WTC11 (cell line): ENCODE measurements at regions of chr6 and their contacts with region 1.

Region 1: DNA sequence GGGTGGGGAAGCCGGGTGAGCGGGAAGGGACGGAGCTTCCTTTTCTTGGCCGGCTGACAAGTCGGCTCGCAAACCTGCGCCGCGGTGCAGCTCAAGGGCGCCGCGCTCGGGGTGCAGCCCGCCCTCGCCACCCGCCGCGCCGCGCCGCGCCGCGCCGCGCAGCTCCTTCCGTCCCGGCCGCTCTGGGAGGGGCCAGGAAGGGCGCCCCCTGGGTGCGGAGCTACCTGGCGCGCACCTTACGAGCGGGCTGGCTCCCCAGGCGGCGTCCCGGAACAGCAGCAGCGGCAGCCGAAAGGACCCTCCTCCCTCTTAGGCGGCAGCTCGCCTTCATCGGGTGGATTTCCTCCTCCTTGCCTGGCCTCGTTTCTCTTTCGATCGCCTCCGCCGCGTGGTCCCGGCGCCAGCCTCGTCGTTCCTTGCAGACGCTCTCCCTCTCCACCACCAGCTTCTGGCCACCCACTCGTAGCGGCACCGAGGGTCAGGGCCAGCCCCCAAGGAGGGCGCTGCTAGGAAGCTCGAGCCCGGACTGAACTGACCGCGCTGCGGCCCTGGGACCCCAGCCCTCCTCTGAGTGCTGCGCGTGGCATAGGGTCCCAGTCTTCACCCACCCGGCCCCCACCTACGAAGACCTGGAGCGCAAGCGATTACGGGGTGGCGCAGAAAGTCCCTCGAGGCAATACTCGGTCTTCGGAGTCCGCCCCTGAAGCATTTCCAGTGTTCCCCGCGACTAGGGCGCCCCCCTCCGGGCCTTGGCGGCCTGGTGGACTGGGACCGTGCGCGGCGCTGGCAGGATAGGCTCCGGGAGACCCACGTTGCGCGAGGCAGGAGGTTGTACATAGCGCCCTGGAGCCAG is at the start of gene MAP3K5:
- DNase-seq: peak; percentile 86
- ATAC-seq: peak; percentile 82
- H3K4me3 Mint-ChIP-seq: peak within 1 kb of the TSS; percentile 84
- H3K27ac Mint-ChIP-seq: no peak within 1 kb of the TSS
- H3K4me1 Mint-ChIP-seq: peaks cover 10% of the 10 kb centered on the region; the same call in 1 of the 2 replicates
- H3K27me3 Mint-ChIP-seq: peaks cover 57% of the 10 kb centered on the region
- CTCF ChIP-seq: peak; percentile 55
- total RNA-seq, gene MAP3K5: 1.6 to 1.9 TPM (median 1.7 TPM) in 3 replicates

Region 2: DNA sequence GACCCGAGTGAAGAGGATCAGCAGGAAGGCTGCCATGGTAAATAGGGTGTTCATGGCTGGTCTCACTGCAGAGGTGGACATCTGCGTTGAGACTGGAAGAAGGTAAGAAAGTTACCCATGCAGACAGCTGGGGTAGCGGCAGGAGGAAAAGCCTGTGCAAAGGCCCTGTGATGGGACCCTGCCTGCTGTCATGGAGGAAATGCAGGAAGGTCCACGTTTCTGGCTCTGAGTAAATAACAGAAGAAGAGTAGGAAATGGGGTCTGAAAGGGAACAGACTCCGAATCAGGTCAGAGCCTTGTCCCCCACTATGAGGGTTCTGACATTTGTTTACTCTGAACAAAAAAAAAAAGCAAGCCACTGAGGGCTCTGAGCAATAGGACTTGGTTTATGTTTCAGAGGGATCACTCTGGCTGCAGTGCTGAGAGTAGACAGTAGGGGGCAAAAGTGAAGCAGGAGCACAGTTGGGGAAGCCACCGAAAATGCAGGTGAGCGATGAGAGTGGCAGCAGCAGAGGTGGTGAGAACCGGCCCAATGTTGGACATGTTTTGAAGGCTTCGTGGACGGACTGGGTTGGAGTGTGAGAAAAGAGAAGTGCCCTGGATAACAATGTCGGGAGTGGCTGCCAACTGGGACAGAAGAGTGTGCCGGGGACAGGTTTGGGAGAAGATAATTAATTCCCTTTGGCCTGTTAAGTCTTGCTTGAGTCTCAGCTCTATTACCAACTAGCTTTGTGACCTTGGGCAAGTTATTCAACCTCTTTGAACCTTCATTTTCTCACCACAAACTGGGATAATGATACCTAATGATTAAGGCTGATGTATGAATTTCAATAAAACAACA is 184.5 kb before region 1 on chr6:
- CTCF ChIA-PET with region 1: interaction called, 17 read pairs
- POLR2A ChIA-PET with region 1: no interaction called
- DNase-seq: peak; percentile 93
- ATAC-seq: peak; percentile 91
- H3K4me3 Mint-ChIP-seq: no peak overlapping the region
- H3K27ac Mint-ChIP-seq: no peak overlapping the region
- H3K4me1 Mint-ChIP-seq: peaks cover 45% of the 10 kb centered on the region
- H3K27me3 Mint-ChIP-seq: no peaks in the 10 kb centered on the region
- CTCF ChIP-seq: peak; percentile 85

Region 3: GRCh38 chr6:136740050-136740974 is 52.3 kb before region 1 on chr6:
- CTCF ChIA-PET with region 1: interaction called, 12 read pairs
- POLR2A ChIA-PET with region 1: no interaction called
- DNase-seq: no peak
- ATAC-seq: no peak
- H3K4me3 Mint-ChIP-seq: no peak overlapping the region
- H3K27ac Mint-ChIP-seq: no peak overlapping the region
- H3K4me1 Mint-ChIP-seq: peaks cover 10% of the 10 kb centered on the region
- H3K27me3 Mint-ChIP-seq: no peaks in the 10 kb centered on the region
- CTCF ChIP-seq: no peak

Region 4: DNA sequence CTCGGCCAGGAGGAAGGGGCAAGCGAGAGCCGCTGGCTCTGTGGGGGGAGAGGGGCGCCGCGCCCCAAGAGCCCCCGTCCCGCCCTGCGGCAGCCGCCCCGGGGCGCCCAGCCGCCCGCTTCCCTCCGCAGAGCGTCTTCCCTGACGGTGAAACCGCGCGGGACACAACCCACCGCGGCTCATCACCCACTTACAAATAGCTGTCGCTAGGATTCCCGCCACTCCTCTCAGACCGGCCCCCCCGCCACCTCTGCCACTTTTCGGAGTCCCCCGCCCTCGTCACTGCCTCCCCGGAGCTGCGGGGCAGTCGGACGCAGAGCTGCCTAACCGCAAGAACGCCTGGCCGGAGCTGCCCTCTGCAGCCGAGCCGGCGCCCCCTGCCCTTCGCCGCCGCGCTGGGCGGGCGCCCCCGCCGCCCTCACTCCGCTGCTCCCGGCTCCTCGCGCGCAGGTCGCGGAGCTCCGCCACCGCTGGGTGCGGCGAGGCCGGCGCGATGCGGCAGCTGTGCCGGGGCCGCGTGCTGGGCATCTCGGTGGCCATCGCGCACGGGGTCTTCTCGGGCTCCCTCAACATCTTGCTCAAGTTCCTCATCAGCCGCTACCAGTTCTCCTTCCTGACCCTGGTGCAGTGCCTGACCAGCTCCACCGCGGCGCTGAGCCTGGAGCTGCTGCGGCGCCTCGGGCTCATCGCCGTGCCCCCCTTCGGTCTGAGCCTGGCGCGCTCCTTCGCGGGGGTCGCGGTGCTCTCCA is 129.5 kb after region 1 on chr6 and contains the start of gene SLC35D3:
- CTCF ChIA-PET with region 1: interaction called, 15 read pairs
- POLR2A ChIA-PET with region 1: no interaction called
- DNase-seq: peak; percentile 43
- ATAC-seq: peak; percentile 46
- H3K4me3 Mint-ChIP-seq: peak within 1 kb of the TSS; percentile 77
- H3K27ac Mint-ChIP-seq: no peak within 1 kb of the TSS
- H3K4me1 Mint-ChIP-seq: peaks cover 20% of the 10 kb centered on the region
- H3K27me3 Mint-ChIP-seq: peaks cover 73% of the 10 kb centered on the region
- CTCF ChIP-seq: no peak
- total RNA-seq, gene SLC35D3: 0.37 to 0.78 TPM (median 0.39 TPM) in 3 replicates